Naive thymus-derived CD4-positive, alpha-beta T cell (primary cell): ENCODE measurements at regions of chr20 and their contacts with region 1.

Region 1: GRCh38 chr20:43666376-43667328 is at the start of gene MYBL2:
- DNase-seq: peak; percentile 53 to 83 (median 66)
- ATAC-seq: peak; percentile 98
- H3K4me3 ChIP-seq: peak within 1 kb of the TSS; percentile 64
- H3K4me3 Mint-ChIP-seq: peak within 1 kb of the TSS; percentile 68 to 83 (median 71)
- H3K27ac ChIP-seq: peak within 1 kb of the TSS; percentile 35
- H3K27ac Mint-ChIP-seq: peak within 1 kb of the TSS in 2 of 9 donors; percentile 49 to 86
- H3K4me1 ChIP-seq: peaks cover 3 to 8% of the 10 kb centered on the region in 2 donors
- H3K4me1 Mint-ChIP-seq: peaks cover 0 to 29% (median 4%) of the 10 kb centered on the region in 7 donors
- H3K27me3 ChIP-seq: peaks cover 0 to 3% of the 10 kb centered on the region in 2 donors
- H3K27me3 Mint-ChIP-seq: peaks cover 12 to 26% (median 15%) of the 10 kb centered on the region in 5 donors
- total RNA-seq, gene MYBL2: 0.58 to 69.7 (median 2.7) TPM in 3 of 5 experiments, not detected in the others

Region 2: DNA sequence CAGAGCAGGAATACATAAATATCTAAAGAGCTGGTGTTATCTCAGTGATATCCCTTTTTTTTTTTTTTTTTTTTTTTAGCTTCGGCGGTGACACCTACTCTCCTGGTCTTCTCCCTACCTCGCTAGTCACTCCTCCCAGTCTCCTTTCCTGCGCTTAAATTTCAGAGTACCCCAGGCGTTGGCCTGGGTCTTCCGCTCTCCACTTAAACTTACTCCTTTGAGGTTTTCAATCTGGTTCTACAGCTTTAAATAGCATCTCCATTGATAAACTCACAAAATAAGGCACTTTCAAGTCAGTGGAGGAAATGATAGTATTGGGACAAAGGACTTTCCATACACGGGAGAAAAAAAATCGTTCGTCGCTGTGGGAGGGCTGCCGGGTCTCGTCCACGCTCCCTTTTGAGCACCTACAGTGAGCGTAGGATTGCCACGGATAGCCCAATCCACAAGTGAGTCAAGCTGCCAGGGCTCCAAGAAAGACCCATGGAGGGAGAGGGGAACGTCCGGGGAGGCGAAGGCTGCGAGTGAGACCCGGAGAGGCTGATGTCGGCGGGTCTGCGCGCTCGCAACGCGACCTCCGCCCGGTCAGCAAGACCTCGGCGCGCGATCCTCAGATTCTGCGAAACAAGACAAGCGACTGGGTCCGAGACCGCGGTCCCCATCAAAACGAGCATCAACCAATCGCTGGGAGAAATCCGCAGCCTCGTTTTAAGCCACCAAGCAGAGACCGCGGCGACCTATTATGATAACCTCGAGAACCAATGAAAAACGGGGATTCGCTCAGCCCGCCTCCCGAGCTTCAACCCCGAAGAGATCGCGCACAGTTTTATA is 209.6 kb before region 1 on chr20:
- CTCF ChIA-PET with region 1: no interaction called
- POLR2A ChIA-PET with region 1: interaction called, 3 read pairs
- intact Hi-C with region 1: loop called in 1 of 2 experiments (anchors 2 kb)
- DNase-seq: peak in 7 of 9 donors; percentile 73 to 92 (median 91)
- ATAC-seq: peak; percentile 82
- H3K4me3 ChIP-seq: peak overlapping the region; percentile 86
- H3K4me3 Mint-ChIP-seq: peak overlapping the region; percentile 79 to 100 (median 94)
- H3K27ac ChIP-seq: peak overlapping the region; percentile 100
- H3K27ac Mint-ChIP-seq: peak overlapping the region; percentile 96 to 100 (median 99)
- H3K4me1 ChIP-seq: peaks cover 10 to 29% of the 10 kb centered on the region in 2 donors
- H3K4me1 Mint-ChIP-seq: peaks cover 24 to 42% (median 35%) of the 10 kb centered on the region in 7 donors
- H3K27me3 ChIP-seq: no peaks in the 10 kb centered on the region
- H3K27me3 Mint-ChIP-seq: peaks cover 0 to 14% (median 4%) of the 10 kb centered on the region in 5 donors

Region 3: DNA sequence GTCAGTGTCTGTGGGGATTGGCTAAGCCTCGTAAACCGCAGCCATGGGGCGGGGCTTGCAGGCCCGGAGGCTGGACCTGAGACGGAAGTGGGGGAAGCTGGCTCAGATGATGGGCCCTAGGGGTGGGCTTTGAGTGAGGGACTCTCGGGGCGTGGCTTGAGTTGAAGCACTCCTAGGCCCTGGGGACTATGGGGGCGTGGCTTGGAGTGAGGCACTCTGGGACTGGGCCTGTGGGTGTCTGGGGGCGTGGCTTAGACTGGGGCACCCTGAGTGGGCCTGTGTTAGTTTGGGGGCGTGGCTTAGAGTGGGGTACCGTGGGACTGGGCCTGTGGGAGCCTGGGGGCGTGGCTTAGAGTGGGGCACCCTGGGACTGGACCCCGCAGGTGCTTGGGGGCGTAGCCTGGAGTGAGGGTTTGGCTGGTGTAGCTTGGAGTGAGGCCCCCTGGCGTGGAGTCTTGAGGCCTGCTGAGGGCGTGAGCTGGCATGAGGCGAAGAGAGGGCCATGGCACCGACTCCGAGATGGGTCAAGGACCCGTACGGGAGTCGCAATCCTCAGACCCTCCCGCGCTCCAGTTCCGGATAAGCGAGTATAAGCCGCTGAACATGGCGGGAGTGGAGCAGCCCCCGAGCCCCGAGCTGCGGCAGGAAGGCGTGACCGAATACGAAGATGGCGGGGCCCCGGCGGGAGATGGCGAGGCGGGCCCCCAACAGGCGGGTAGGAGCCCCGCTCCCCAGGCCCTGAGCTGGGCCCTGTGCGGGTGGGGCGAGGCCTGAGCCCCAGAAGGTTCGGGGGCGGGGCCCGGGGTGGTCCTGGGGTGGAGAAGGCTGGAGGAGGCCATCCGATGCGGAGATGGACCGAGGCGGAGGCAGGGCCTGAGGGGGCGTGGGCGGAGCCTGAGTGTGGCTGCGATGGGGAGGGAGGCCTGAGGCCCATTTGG is 152.3 kb before region 1 on chr20:
- CTCF ChIA-PET with region 1: no interaction called
- POLR2A ChIA-PET with region 1: no interaction called
- intact Hi-C with region 1: loop called (anchors 1 kb)
- DNase-seq: peak; percentile 74 to 94 (median 90)
- ATAC-seq: peak; percentile 96
- H3K4me3 ChIP-seq: peak overlapping the region; percentile 70
- H3K4me3 Mint-ChIP-seq: peak overlapping the region; percentile 89 to 100 (median 94)
- H3K27ac ChIP-seq: peak overlapping the region; percentile 58
- H3K27ac Mint-ChIP-seq: peak overlapping the region; percentile 86 to 94 (median 90)
- H3K4me1 ChIP-seq: peaks cover 7 to 21% of the 10 kb centered on the region in 2 donors
- H3K4me1 Mint-ChIP-seq: peaks cover 3 to 28% (median 21%) of the 10 kb centered on the region in 7 donors
- H3K27me3 ChIP-seq: no peaks in the 10 kb centered on the region
- H3K27me3 Mint-ChIP-seq: peaks cover 2 to 10% (median 3%) of the 10 kb centered on the region in 5 donors

Region 4: DNA sequence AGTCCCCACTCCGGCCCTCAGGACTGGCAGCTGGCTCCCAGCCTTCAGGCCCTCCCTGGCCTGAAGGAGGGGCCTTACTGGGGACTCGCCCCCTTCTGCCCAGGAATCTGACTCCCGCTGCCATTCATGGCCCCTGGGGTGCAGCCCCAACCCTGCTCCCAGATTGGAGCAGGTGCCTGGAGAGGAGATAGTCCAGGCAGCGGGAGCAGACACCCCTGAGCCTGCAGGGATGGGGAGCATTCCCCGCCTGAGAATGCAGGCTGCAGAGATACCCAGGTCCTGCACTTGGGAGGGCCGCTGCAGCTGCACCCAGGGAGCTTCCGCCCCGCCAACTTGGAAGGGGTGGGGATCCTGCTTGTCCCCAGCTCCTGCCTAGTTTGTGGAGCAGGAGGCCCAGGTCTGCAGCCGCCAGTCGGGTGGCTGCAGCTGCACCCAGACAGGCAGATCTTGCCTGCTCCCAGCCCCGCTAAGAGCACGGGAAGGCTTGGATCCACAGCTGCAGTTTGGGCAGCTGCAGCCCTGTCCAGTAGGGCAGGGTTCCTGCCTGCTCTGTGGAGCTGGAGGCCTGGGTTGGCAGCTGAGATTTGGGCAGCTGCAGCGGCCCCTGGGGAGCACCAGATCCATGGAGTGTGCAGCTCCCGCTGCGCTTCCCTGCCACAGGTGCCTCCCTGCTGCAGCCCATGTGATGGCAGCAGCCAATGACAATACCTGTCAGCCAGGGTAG is 54.9 kb after region 1 on chr20:
- CTCF ChIA-PET with region 1: no interaction called
- POLR2A ChIA-PET with region 1: no interaction called
- intact Hi-C with region 1: loop called in 1 of 2 experiments (anchors 10 kb)
- DNase-seq: no peak
- ATAC-seq: no peak
- H3K4me3 ChIP-seq: peak overlapping the region; percentile 62
- H3K4me3 Mint-ChIP-seq: peak overlapping the region; percentile 62 to 92 (median 79)
- H3K27ac ChIP-seq: peak overlapping the region; percentile 75
- H3K27ac Mint-ChIP-seq: peak overlapping the region; percentile 65 to 95 (median 88)
- H3K4me1 ChIP-seq: peaks cover 0 to 53% of the 10 kb centered on the region in 2 donors
- H3K4me1 Mint-ChIP-seq: peaks cover 13 to 95% (median 70%) of the 10 kb centered on the region in 7 donors
- H3K27me3 ChIP-seq: no peaks in the 10 kb centered on the region
- H3K27me3 Mint-ChIP-seq: no peaks in the 10 kb centered on the region